HEK293 (cell line): ENCODE measurements at regions of chr9 and their contacts with region 1.

Region 1: DNA sequence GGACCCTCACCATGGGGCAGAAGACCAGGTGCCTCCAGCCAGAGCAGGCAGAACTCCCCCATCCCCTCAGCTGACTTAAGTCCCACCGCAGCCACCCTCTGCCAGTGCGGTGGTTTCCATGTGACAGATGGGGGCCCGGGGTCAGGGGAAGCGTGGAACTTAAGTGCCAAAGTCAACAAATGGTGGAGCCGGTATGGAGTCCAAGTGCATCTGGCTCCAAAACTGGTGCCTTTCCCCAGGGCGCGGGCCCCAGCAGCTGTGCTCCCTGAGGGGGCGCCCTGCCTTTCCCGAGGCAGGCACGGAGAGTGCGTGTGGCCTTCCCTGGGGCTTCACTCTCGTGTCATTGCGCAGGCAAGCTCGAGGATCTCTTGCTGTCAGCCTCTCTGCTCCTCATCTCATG is 33.9 kb downstream of the SLC46A2 start:
- H3K4me3 ChIP-seq: no peak overlapping the region
- H3K27ac ChIP-seq: no peak overlapping the region
- H3K4me1 ChIP-seq: no peaks in the 10 kb centered on the region
- CTCF ChIP-seq: no peak

Region 2: GRCh38 chr9:112819635-112820496 is 36.9 kb before region 1 on chr9:
- CTCF ChIA-PET with region 1: no interaction called
- POLR2A ChIA-PET with region 1: no interaction called
- H3K4me3 ChIP-seq: no peak overlapping the region
- H3K27ac ChIP-seq: no peak overlapping the region
- H3K4me1 ChIP-seq: no peaks in the 10 kb centered on the region
- CTCF ChIP-seq: no peak

Region 3: GRCh38 chr9:112844771-112845542 is 11.9 kb before region 1 on chr9:
- CTCF ChIA-PET with region 1: interaction called, 14 read pairs
- POLR2A ChIA-PET with region 1: no interaction called
- H3K4me3 ChIP-seq: no peak overlapping the region
- H3K27ac ChIP-seq: no peak overlapping the region
- H3K4me1 ChIP-seq: no peaks in the 10 kb centered on the region
- CTCF ChIP-seq: 0 out of 2 replicates have a peak, but pooled peaks have one; percentile 16

Region 4: GRCh38 chr9:112887381-112887780 is 30.6 kb after region 1 on chr9:
- CTCF ChIA-PET with region 1: no interaction called
- POLR2A ChIA-PET with region 1: no interaction called
- H3K4me3 ChIP-seq: no peak overlapping the region
- H3K27ac ChIP-seq: no peak overlapping the region
- H3K4me1 ChIP-seq: no peaks in the 10 kb centered on the region
- CTCF ChIP-seq: no peak